MCF 10A (cell line): ENCODE measurements at regions of chr10 and their contacts with region 1.

Region 1: GRCh38 chr10:117804470-117805011 is 242.2 kb downstream of the RAB11FIP2 start:
- DNase-seq: peak; percentile 82
- H3K4me3 Mint-ChIP-seq: peak overlapping the region; percentile 44
- H3K27ac Mint-ChIP-seq: peak overlapping the region; percentile 99
- H3K4me1 Mint-ChIP-seq: peaks cover 42% of the 10 kb centered on the region
- H3K27me3 Mint-ChIP-seq: no peaks in the 10 kb centered on the region
- CTCF ChIP-seq: no peak

Region 2: DNA sequence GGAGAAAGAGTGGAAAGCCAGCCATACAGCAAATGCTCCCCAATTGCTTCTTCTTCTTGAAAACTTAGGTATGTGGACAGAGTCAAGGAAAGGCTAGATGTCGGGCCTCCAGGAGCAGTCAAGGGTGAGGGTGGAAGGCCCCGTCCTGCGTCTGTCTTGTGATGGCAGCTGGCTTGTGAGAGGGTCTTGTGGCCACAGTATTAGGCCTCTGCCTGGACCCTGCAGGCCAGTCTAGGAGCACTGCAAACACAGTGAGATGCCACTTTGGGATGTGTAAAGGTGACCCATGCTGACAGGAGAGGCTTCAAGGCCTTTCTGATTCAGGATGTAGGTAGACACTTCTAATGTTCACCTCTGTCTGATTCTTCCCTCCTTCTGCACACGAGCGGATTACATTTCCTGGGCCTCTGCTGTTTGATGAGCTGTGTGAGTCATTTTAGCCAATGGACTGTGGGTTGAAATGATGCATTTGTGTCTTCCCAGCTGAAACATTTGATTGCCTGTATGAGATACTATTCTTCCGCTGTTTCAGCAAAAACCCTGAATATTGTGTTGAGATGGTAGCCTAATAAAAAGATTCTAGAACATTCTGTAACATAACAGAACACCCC is 126.5 kb before region 1 on chr10:
- CTCF ChIA-PET with region 1: no interaction called
- POLR2A ChIA-PET with region 1: interaction called, 11 read pairs
- intact Hi-C with region 1: no loop called
- DNase-seq: peak; percentile 48
- H3K4me3 Mint-ChIP-seq: no peak overlapping the region
- H3K27ac Mint-ChIP-seq: no peak overlapping the region
- H3K4me1 Mint-ChIP-seq: peaks cover 27% of the 10 kb centered on the region
- H3K27me3 Mint-ChIP-seq: no peaks in the 10 kb centered on the region
- CTCF ChIP-seq: no peak

Region 3: DNA sequence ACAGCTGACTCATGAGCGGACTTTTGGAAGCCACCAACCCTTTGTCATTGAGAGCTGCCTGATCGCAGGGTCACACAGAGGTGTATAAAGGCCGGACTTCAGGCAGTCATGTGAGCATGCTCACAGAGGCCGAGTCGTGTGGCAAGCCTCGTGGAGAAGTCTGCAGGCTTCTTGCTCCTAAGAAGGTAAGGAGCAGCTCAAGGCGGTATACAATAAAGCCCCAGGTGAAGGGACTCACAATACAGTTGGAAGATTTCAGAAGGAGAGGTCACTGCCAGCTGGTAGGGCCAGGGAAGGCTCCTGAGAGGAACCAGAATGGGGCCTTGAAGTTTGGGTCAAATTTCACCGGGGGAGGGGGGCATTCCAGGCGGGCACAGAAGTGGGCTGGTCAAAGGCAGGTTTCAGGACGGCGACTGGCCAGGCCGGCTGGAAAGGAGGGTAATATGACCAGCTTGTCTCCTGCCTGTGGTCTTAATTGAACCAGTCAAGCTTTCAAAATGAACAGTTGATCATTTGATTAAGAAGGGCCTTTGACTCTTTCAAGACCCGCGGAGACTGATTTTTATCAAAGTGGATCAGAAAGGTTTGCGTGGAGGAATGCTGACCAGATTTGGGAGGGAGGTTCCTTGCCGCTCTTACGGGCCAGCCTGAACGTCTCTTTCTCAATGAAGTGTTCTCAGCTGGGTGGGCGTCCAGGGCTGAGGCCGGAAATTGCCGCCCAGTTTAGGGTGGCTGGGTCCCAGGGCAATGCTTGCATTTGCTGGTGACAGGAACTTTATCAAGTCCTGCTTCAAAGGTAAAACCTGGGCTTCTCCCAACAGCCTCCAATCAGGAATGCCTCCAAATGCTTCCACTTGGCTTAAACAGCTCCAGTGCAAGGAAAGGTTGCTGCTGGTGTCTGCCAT is 83.4 kb before region 1 on chr10:
- CTCF ChIA-PET with region 1: interaction called, 3 read pairs
- POLR2A ChIA-PET with region 1: interaction called, 12 read pairs
- intact Hi-C with region 1: no loop called
- DNase-seq: no peak
- H3K4me3 Mint-ChIP-seq: no peak overlapping the region
- H3K27ac Mint-ChIP-seq: no peak overlapping the region
- H3K4me1 Mint-ChIP-seq: peaks cover 17% of the 10 kb centered on the region
- H3K27me3 Mint-ChIP-seq: no peaks in the 10 kb centered on the region
- CTCF ChIP-seq: no peak

Region 4: GRCh38 chr10:117818721-117819120 is 14.2 kb after region 1 on chr10:
- CTCF ChIA-PET with region 1: no interaction called
- POLR2A ChIA-PET with region 1: interaction called, 24 read pairs
- intact Hi-C with region 1: no loop called
- DNase-seq: peak; percentile 47
- H3K4me3 Mint-ChIP-seq: no peak overlapping the region
- H3K27ac Mint-ChIP-seq: peak overlapping the region; percentile 13
- H3K4me1 Mint-ChIP-seq: peaks cover 15% of the 10 kb centered on the region
- H3K27me3 Mint-ChIP-seq: no peaks in the 10 kb centered on the region
- CTCF ChIP-seq: no peak

Region 5: DNA sequence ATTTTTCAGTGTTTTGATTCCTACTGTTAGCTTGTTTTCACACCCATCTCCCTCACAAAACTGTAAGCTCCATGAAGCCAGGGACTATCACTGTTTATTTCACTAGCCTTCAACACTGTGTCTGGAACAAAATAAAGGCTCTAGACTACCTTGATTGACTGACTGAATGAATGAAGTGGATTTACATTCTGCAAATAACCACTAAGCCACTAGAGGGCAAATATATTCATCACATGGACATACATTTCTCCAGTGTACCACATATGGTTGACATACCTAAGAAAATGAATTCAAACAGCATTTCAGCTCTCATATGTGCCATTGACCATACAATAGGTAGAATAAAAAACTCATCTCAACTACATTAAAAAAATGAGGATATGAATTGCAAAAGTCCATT is 56.3 kb after region 1 on chr10:
- CTCF ChIA-PET with region 1: interaction called, 3 read pairs
- POLR2A ChIA-PET with region 1: interaction called, 14 read pairs
- intact Hi-C with region 1: no loop called
- DNase-seq: peak; percentile 34
- H3K4me3 Mint-ChIP-seq: no peak overlapping the region
- H3K27ac Mint-ChIP-seq: no peak overlapping the region
- H3K4me1 Mint-ChIP-seq: no peaks in the 10 kb centered on the region
- H3K27me3 Mint-ChIP-seq: no peaks in the 10 kb centered on the region
- CTCF ChIP-seq: peak; percentile 23

Region 6: GRCh38 chr10:118046395-118047156 is 242.0 kb after region 1 on chr10 and contains the start of gene RAB11FIP2:
- CTCF ChIA-PET with region 1: no interaction called
- POLR2A ChIA-PET with region 1: interaction called, 16 read pairs
- intact Hi-C with region 1: loop called (anchors 5 kb)
- DNase-seq: peak; percentile 91
- H3K4me3 Mint-ChIP-seq: peak within 1 kb of the TSS; percentile 82
- H3K27ac Mint-ChIP-seq: peak within 1 kb of the TSS; percentile 87
- H3K4me1 Mint-ChIP-seq: peaks cover 24% of the 10 kb centered on the region
- H3K27me3 Mint-ChIP-seq: no peaks in the 10 kb centered on the region
- CTCF ChIP-seq: no peak
- total RNA-seq, gene RAB11FIP2: 23.9 and 27.1 TPM in 2 replicates